ENCODE measurements at regions of chr6 and their contacts with region 1.

Region 1: DNA sequence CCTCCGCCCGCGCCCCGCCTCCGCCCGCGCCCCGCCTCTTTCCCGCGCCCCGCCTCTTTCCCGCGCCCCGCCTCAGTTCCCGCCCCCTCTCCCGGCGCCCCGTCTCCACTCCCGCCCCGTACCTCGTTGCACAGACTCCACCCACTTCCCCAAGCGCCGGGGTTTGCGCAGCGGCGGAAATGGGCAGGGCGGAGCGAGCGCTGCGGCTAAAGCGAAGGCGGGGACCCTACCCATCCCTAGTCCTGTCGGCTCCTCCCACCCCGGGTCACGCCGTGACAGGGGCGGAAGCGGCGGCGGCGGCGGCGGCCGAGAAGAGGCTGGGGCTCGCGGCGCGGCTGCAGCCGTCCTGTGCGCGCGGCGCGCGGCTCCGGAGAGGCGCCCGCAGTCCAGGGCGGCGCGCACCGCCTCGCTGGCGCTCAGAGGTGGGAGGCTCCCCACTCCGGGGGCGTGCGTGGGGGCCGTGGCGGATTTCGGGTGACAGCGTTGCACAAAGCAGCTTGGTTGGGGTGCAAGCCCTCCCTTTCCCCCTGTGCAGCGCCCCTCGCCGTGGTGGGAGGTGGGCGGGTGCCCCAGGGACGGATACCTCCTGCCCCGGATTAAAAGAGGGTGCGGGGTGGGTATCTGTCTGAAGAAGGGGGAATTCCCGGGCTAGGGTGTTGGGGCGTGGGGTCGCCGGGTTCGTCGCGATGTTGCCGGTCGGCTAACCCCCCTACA is at the start of gene KDM1B:
- DNase-seq: peak; percentile 100
- total RNA-seq, gene KDM1B: 13.8 TPM

Region 2: DNA sequence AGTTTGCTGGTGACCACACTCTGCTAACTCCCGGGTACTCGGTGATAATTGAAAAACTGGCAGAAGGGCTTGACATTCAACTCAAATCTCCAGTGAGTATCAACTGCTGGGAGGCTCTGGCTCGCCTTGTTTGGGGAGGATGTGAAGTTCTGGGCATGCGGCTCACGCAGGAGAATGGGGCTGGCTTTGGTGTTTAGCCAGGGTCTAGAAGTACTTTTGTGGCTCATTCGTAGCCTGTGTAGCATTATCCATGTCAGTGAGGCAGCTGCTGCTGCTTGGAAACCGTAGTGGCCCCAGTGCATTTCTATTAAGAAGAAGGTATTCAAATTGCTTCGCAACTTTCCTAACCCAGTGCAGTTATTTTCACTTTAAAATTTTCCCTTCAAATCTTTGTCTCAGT is 52.1 kb after region 1 on chr6:
- intact Hi-C with region 1: no loop called
- DNase-seq: no peak

Region 3: GRCh38 chr6:18264219-18264922 is 109.1 kb after region 1 on chr6 and contains the start of gene DEK:
- intact Hi-C with region 1: loop called (anchors 10 kb)
- DNase-seq: peak; percentile 94
- total RNA-seq, gene DEK: 37.6 TPM

Measured in cardiac septum (tissue), 1 donor.